ENCODE measurements at regions of chr2 and their contacts with region 1.

Region 1: GRCh38 chr2:203740780-203741281 is 34.4 kb downstream of the CD28 start:
- DNase-seq: peak in 9 of 10 donors; percentile 7 to 90 (median 66)
- ATAC-seq: peak; percentile 81 to 87
- H3K4me3 Mint-ChIP-seq: peak overlapping the region; percentile 48 to 85 (median 67)
- H3K27ac Mint-ChIP-seq: peak overlapping the region; percentile 88 to 99 (median 96)
- H3K4me1 Mint-ChIP-seq: peaks cover 30 to 89% (median 78%) of the 10 kb centered on the region in 4 donors
- H3K27me3 Mint-ChIP-seq: no peaks in the 10 kb centered on the region

Region 2: DNA sequence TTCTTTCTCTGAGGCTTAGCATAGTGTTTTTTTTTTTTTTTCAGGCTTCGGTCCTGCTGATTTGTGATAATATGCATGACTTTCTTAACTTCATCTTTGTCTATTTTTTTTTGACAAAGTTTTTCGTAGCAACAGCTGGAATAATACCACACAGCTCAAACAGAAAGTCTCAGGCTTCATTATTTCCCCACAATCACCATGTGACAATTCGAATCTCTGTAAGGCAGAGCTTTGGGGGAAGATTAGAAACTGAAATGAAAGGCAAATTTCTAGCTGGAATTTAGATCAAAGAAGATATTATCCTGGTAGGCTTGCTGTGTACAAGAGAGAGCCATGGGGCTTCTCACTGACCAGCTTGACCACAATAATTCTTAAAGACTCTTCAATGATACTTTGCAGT is 46.6 kb before region 1 on chr2:
- POLR2A ChIA-PET with region 1: no interaction called
- DNase-seq: no peak
- ATAC-seq: no peak
- H3K4me3 Mint-ChIP-seq: no peak overlapping the region
- H3K27ac Mint-ChIP-seq: no peak overlapping the region
- H3K4me1 Mint-ChIP-seq: peaks cover 6 to 23% (median 20%) of the 10 kb centered on the region in 4 donors
- H3K27me3 Mint-ChIP-seq: peaks cover 0 to 14% (median 0%) of the 10 kb centered on the region in 5 donors

Region 3: GRCh38 chr2:203718087-203718486 is 22.7 kb before region 1 on chr2:
- POLR2A ChIA-PET with region 1: interaction called, 194 read pairs
- DNase-seq: peak in 9 of 10 donors; percentile 23 to 80 (median 59)
- ATAC-seq: peak; percentile 61 to 63
- H3K4me3 Mint-ChIP-seq: peak overlapping the region; percentile 45 to 83 (median 72)
- H3K27ac Mint-ChIP-seq: peak overlapping the region; percentile 89 to 99 (median 97)
- H3K4me1 Mint-ChIP-seq: peaks cover 65 to 97% (median 96%) of the 10 kb centered on the region in 4 donors
- H3K27me3 Mint-ChIP-seq: no peaks in the 10 kb centered on the region

Region 4: GRCh38 chr2:203751685-203752271 is 10.9 kb after region 1 on chr2:
- POLR2A ChIA-PET with region 1: interaction called, 12 read pairs
- DNase-seq: no peak
- ATAC-seq: no peak
- H3K4me3 Mint-ChIP-seq: no peak overlapping the region
- H3K27ac Mint-ChIP-seq: peak overlapping the region in 1 of 10 donors; percentile 5
- H3K4me1 Mint-ChIP-seq: peaks cover 22 to 44% (median 41%) of the 10 kb centered on the region in 4 donors
- H3K27me3 Mint-ChIP-seq: peaks cover 0 to 4% (median 0%) of the 10 kb centered on the region in 5 donors

Region 5: DNA sequence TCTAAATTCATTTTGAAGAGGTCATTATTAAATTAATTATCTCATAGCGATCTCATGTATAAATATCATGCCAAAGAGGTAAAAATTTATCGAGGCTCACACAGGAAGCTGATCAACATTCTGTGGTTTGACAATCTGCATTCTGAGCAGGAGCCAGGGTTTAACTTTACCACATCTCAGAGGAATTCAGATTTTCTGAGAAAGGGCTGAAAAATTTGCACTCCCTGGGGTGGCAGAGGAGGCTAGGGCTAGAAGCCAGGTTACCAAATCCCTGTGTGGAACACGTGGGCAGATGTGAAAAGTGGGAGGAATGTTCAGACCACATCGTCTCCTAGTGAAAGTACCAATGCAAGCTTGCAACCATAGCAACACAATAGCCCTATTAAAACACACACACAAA is 63.2 kb after region 1 on chr2:
- POLR2A ChIA-PET with region 1: interaction called, 12 read pairs
- DNase-seq: peak in 5 of 10 donors; percentile 21 to 44 (median 31)
- ATAC-seq: peak; percentile 82 to 86
- H3K4me3 Mint-ChIP-seq: peak overlapping the region; percentile 31 to 79 (median 66)
- H3K27ac Mint-ChIP-seq: peak overlapping the region in 8 of 10 donors; percentile 7 to 85 (median 80)
- H3K4me1 Mint-ChIP-seq: peaks cover 20 to 61% (median 51%) of the 10 kb centered on the region in 4 donors
- H3K27me3 Mint-ChIP-seq: no peaks in the 10 kb centered on the region

Region 6: GRCh38 chr2:204019572-204020501 is 279.0 kb after region 1 on chr2:
- POLR2A ChIA-PET with region 1: no interaction called
- DNase-seq: no peak
- ATAC-seq: no peak
- H3K4me3 Mint-ChIP-seq: no peak overlapping the region
- H3K27ac Mint-ChIP-seq: no peak overlapping the region
- H3K4me1 Mint-ChIP-seq: peaks cover 1 to 10% (median 6%) of the 10 kb centered on the region in 4 donors
- H3K27me3 Mint-ChIP-seq: peaks cover 0 to 2% (median 0%) of the 10 kb centered on the region in 5 donors